ENCODE measurements at regions of chr15 and their contacts with region 1.

Region 1: GRCh38 chr15:60179786-60180391 is 175.8 kb downstream of the FOXB1 start:
- DNase-seq: no peak
- H3K4me3 ChIP-seq: no peak overlapping the region
- H3K27ac ChIP-seq: no peak overlapping the region
- H3K4me1 ChIP-seq: no peaks in the 10 kb centered on the region
- H3K27me3 ChIP-seq: no peaks in the 10 kb centered on the region
- CTCF ChIP-seq: peak; percentile 78

Region 2: DNA sequence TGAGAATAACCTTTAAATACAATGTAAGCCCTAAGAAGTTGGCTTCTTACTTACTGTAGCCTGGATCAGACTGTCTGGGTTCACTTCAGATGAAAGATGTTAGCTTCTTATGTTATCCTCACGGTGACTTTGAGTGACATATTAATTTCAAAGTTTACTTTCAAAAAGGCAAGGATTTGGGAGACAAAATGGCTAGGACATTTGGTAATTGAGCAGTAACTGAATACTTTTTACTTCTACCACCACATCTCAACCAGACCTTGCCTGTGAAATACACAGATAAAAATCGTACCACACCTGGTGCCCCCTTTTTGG is 454.8 kb before region 1 on chr15:
- CTCF ChIA-PET with region 1: no interaction called
- POLR2A ChIA-PET with region 1: no interaction called
- intact Hi-C with region 1: loop called (anchors 5 kb)
- DNase-seq: no peak
- H3K4me3 ChIP-seq: no peak overlapping the region
- H3K27ac ChIP-seq: no peak overlapping the region
- H3K4me1 ChIP-seq: no peaks in the 10 kb centered on the region
- H3K27me3 ChIP-seq: no peaks in the 10 kb centered on the region
- CTCF ChIP-seq: no peak

Region 3: DNA sequence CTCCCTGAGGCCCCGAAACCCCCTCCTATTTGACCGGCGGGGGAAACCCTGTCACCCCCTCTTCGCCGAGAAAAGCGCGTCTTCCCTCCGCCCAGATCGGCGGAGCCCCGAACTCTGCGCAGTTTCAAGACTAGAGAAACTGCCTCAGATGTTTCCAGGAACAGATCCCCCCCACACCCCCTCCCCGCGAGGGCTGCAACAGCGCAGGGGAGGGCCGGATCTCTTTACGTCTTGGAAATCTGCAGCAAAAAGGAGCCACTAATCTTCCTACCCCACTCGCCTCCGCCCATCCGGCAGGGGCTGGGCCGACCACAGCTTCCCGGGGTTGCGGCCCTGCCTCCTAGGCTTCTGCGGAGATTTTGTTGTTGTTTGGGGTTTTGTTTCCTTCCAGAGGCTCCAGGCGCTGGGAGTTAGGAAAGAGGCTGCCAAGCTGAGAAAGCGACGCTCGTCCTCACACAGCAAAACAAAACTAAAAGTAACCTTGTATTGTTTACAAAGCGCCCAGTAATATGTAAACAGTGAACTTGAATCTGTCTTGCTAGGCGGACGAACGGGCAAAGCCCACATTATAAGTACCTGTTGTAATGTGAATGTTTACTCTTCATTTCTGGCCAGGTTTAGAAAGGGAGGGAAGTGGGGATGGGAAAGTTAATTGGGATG is 173.6 kb before region 1 on chr15:
- CTCF ChIA-PET with region 1: interaction called, 4 read pairs
- POLR2A ChIA-PET with region 1: no interaction called
- intact Hi-C with region 1: loop called (anchors 5 kb)
- DNase-seq: peak; percentile 88 to 91
- H3K4me3 ChIP-seq: peak overlapping the region; percentile 82
- H3K27ac ChIP-seq: peak overlapping the region; percentile 95
- H3K4me1 ChIP-seq: peaks cover 28% of the 10 kb centered on the region
- H3K27me3 ChIP-seq: no peaks in the 10 kb centered on the region
- CTCF ChIP-seq: no peak

Region 4: GRCh38 chr15:60251229-60251628 is 71.3 kb after region 1 on chr15:
- CTCF ChIA-PET with region 1: no interaction called
- POLR2A ChIA-PET with region 1: interaction called, 34 read pairs
- intact Hi-C with region 1: no loop called
- DNase-seq: no peak
- H3K4me3 ChIP-seq: no peak overlapping the region
- H3K27ac ChIP-seq: no peak overlapping the region
- H3K4me1 ChIP-seq: peaks cover 4% of the 10 kb centered on the region; the same call in 1 of the 2 replicates
- H3K27me3 ChIP-seq: no peaks in the 10 kb centered on the region
- CTCF ChIP-seq: no peak

Measured in PC-9 (cell line).